ENCODE measurements at regions of chrX and their contacts with region 1.

Region 1: DNA sequence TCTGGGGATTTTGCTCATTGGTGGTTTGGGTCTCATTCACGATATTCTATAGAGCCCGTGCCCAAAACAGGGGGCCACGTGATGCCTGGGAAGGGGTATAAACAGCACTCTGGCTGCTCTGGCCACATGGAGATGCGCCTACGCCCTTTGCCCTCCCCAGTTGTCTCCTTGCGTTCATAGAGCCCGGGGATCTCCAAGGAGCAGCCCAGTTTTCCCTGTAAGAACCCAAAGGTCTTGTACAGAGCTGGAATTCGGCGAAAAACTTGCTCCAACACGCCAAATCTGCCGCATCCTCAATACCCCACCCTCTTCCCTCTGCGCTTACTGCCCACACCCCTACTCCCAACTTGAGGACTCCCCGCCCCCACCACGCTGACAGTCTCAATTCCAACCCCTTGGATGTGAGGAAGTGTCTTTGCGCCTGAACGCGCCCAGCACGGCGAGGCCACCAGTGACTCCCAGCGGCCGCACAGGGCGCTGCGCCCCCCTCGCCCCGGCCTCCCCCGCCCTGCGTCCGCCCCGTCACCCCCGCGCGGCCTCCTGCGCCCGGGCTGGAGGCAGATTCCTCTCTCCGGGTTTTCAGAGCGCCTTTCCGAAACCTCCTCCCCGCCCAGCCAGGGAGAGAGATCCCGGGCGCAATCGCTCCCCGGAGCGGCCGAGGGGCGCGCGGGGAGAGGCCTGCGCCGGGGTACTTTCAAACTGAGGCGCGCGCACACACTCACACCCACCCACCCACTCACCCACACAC is at the start of gene NHS:
- DNase-seq: peak; percentile 80
- H3K4me3 ChIP-seq: peak within 1 kb of the TSS; percentile 64 to 77 (median 74)
- H3K27ac ChIP-seq: peak within 1 kb of the TSS; percentile 91
- H3K4me1 ChIP-seq: peaks cover 15% of the 10 kb centered on the region
- H3K27me3 ChIP-seq: no peaks in the 10 kb centered on the region
- CTCF ChIP-seq: peak in 1 of 2 donors; percentile 56
- total RNA-seq, gene NHS: 9.0 to 13.9 TPM

Region 2: DNA sequence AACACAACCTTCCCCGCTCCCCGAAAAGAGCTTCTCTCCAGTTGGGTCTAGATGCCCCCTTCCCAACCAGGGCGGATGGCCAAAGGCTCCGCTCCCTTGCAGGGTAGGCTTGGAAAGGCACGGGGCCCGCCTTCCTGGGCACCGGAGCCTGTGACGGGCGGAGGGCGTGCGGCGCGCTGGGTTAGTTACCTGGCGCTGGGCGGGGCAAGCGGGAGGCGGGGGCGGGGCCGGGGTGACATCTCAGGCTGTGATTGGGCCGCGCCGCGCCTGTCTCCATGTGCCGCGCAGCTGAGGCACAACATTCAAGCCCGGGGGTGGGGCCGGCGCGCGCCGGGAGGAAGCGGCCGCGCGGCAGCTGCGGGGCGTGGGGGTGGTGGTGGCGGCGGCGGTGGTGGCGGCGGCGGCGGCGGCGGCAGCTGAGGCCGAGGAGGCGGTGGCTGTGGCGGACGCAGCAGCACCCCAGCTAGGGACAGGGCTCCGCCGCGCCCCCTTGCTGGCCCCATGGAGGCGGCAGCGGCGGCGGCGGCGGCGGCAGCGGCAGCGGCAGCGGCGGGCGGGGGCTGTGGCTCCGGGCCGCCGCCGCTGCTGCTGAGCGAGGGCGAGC is 428.3 kb before region 1 on chrX and contains the start of gene REPS2:
- CTCF ChIA-PET with region 1: no interaction called
- dilution Hi-C with region 1: no loop called
- in situ Hi-C with region 1: no loop called
- intact Hi-C with region 1: no loop called
- DNase-seq: peak; percentile 71
- H3K4me3 ChIP-seq: peak within 1 kb of the TSS; percentile 46 to 71 (median 65)
- H3K27ac ChIP-seq: no peak within 1 kb of the TSS
- H3K4me1 ChIP-seq: no peaks in the 10 kb centered on the region
- H3K27me3 ChIP-seq: no peaks in the 10 kb centered on the region
- CTCF ChIP-seq: no peak
- total RNA-seq, gene REPS2: 4.8 to 11.2 TPM

Region 3: GRCh38 chrX:17160971-17161370 is 213.8 kb before region 1 on chrX:
- CTCF ChIA-PET with region 1: no interaction called
- dilution Hi-C with region 1: no loop called
- in situ Hi-C with region 1: no loop called
- intact Hi-C with region 1: loop called (anchors 2 kb)
- DNase-seq: no peak
- H3K4me3 ChIP-seq: no peak overlapping the region
- H3K27ac ChIP-seq: no peak overlapping the region
- H3K4me1 ChIP-seq: no peaks in the 10 kb centered on the region
- H3K27me3 ChIP-seq: no peaks in the 10 kb centered on the region
- CTCF ChIP-seq: peak; percentile 21 to 39

Region 4: DNA sequence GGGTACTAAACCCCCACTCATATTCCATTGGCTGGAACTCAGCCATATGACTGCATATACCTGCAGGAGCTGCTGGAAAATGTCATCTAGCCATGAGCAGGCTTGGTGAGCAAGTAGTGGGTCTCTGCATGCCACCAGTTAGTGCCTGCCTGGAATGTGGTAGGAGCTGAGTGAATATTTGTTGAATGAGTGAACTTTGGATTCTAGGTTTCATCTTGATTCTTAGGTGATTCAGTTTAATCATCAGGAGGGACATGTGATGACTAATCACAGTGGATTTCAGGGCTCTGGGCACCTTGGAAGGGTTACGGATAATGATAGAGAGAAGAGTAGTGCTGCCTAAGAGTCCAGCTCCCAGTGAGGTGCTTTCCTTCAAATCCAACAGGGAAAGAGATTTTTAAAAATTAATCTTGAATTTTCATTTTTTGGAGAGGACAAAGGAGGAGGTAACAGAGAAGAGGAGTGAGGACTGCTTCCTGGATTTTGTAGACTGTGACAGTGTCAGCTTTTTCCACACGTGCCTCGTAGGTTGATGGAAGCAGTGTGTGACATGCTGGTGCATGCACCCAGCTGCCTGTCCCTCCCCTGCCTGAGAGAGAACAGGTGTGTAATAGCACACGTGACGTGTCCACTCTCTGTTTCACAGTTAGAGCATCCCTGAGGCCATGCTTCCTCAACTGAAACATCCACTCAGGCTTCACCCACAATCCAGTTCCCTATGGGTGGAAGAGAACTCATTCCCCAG is 30.6 kb after region 1 on chrX:
- CTCF ChIA-PET with region 1: no interaction called
- dilution Hi-C with region 1: no loop called
- in situ Hi-C with region 1: no loop called
- intact Hi-C with region 1: loop called (anchors 2 kb)
- DNase-seq: peak; percentile 96
- H3K4me3 ChIP-seq: no peak overlapping the region
- H3K27ac ChIP-seq: peak overlapping the region; percentile 92
- H3K4me1 ChIP-seq: peaks cover 40% of the 10 kb centered on the region
- H3K27me3 ChIP-seq: no peaks in the 10 kb centered on the region
- CTCF ChIP-seq: no peak

Region 5: GRCh38 chrX:17435466-17435865 is 60.7 kb after region 1 on chrX:
- CTCF ChIA-PET with region 1: no interaction called
- dilution Hi-C with region 1: no loop called
- in situ Hi-C with region 1: no loop called
- intact Hi-C with region 1: no loop called
- DNase-seq: no peak
- H3K4me3 ChIP-seq: no peak overlapping the region
- H3K27ac ChIP-seq: no peak overlapping the region
- H3K4me1 ChIP-seq: peaks cover 7% of the 10 kb centered on the region
- H3K27me3 ChIP-seq: no peaks in the 10 kb centered on the region
- CTCF ChIP-seq: no peak

Region 6: GRCh38 chrX:17459661-17460060 is 84.9 kb after region 1 on chrX:
- CTCF ChIA-PET with region 1: no interaction called
- dilution Hi-C with region 1: no loop called
- in situ Hi-C with region 1: no loop called
- intact Hi-C with region 1: loop called (anchors 5 kb)
- DNase-seq: peak; percentile 80
- H3K4me3 ChIP-seq: no peak overlapping the region
- H3K27ac ChIP-seq: peak overlapping the region; percentile 65
- H3K4me1 ChIP-seq: peaks cover 14% of the 10 kb centered on the region
- H3K27me3 ChIP-seq: no peaks in the 10 kb centered on the region
- CTCF ChIP-seq: no peak

Region 7: DNA sequence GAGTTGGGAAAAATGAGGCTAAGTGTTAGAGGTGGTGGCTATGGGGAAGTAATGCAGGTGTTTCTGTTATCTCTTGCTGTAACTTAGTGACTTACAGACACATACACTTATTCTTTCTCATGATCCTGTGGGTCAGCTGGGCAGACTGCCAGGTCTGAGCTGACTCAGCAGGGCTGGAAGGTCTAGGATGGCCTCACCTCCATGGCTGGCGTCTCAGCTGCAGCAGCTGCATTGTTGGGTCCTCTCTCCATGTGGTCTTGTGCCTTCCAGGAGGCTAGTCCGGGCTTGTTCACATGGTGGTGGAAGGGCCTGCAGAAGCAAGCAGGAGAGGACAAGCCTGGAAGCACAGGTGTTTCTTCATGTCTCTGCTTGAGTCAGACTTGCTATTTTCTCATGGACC is 172.9 kb after region 1 on chrX:
- CTCF ChIA-PET with region 1: interaction called, 3 read pairs
- dilution Hi-C with region 1: no loop called
- in situ Hi-C with region 1: no loop called
- intact Hi-C with region 1: loop called (anchors 1 kb)
- DNase-seq: peak; percentile 99
- H3K4me3 ChIP-seq: no peak overlapping the region
- H3K27ac ChIP-seq: peak overlapping the region; percentile 63
- H3K4me1 ChIP-seq: peaks cover 50% of the 10 kb centered on the region
- H3K27me3 ChIP-seq: no peaks in the 10 kb centered on the region
- CTCF ChIP-seq: no peak

Region 8: DNA sequence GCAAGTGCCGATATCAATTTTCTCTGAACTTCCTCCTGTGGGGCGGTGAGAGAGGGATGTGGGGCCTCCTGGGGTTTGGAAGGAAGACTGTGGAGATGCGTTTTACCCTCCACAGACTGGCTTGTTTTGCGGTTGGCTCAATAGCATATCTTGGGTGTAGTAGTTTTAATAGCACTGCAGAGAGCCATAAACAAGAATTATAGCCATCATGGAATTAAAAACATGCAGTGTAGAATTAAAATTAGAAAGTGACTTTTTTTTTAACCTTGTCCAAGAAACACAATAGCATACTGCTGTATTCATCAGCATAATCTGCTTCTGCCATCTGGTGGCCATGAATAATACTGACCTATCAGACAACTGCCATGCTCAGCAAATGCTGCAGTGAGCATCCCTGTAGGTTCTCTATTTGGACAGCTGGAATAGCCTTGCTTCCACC is 315.2 kb after region 1 on chrX:
- CTCF ChIA-PET with region 1: no interaction called
- dilution Hi-C with region 1: no loop called
- in situ Hi-C with region 1: no loop called
- intact Hi-C with region 1: loop called (anchors 1 kb)
- DNase-seq: peak; percentile 49
- H3K4me3 ChIP-seq: no peak overlapping the region
- H3K27ac ChIP-seq: no peak overlapping the region
- H3K4me1 ChIP-seq: no peaks in the 10 kb centered on the region
- H3K27me3 ChIP-seq: no peaks in the 10 kb centered on the region
- CTCF ChIP-seq: peak; percentile 73 to 75

Region 9: DNA sequence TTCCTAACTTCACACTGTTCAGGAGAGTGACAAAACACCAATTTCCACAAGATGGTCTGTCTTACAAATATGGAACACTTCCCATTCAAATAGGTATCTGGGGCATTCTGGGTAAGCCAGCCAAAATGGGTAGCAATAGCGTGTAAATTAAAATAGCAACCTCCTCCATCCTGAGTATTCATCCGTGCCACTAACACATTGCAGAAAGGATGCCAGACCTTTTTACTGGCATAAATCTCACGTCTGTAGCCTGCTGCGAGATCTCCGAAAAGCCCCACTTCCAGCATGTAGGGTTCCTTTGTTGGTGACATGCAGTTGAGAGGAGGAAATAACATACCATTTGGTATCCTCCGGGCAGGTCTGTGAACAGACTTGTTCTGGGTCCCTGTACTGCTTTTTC is 539.0 kb after region 1 on chrX:
- CTCF ChIA-PET with region 1: no interaction called
- dilution Hi-C with region 1: no loop called
- in situ Hi-C with region 1: no loop called
- intact Hi-C with region 1: no loop called
- DNase-seq: no peak
- H3K4me3 ChIP-seq: no peak overlapping the region
- H3K27ac ChIP-seq: no peak overlapping the region
- H3K4me1 ChIP-seq: no peaks in the 10 kb centered on the region
- H3K27me3 ChIP-seq: no peaks in the 10 kb centered on the region
- CTCF ChIP-seq: no peak

Measured in mammary epithelial cell (primary cell).